Activated CD4-positive, alpha-beta T cell treated with anti-CD3 and anti-CD28 coated beads for 36 hours (primary cell): ENCODE measurements at regions of chr18 and their contacts with region 1.

Region 1: DNA sequence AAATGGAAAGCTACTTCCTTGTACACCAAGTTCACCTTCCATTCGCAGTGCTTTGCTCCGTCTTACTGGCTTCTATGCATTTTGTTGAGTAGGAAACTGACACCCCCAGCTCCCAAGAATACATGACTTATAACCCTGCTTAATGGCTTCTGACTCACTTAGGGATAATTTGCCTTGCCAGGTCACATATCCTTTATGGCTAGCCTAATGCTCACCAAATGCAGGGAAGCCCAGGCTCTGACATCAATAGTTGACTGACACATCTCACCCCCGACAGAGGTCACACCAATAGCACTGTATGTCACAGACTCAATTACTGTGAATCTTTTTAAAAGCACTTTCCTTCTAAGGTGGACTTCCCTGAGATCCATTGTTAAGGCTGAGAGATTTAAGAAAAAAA is 147.2 kb downstream of the DTNA start:
- DNase-seq: no peak
- ATAC-seq: no peak
- H3K4me3 Mint-ChIP-seq: no peak overlapping the region
- H3K27ac Mint-ChIP-seq: peak overlapping the region; percentile 23
- H3K4me1 Mint-ChIP-seq: peaks cover 35% of the 10 kb centered on the region
- H3K27me3 Mint-ChIP-seq: peaks cover 20% of the 10 kb centered on the region

Region 2: DNA sequence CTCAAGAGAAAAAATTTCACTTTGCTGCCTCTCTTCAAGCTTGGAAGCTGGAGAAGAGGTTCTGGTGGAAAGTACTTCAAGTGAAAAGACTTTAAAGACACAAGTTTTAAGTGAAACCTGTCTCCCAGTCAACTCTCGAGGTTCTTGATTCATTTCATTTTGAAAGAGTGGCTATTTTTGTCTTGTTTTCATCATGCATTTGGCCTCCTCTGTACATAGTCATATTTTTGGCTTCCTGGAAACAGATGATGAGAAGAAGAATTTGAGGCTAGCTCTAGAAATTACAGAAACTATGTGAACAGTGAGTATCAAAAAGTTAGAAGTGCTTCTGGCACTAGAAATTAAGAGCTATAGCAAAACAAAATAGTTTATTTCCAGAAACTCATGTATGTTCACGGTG is 22.4 kb before region 1 on chr18:
- CTCF ChIA-PET with region 1: no interaction called
- POLR2A ChIA-PET with region 1: no interaction called
- intact Hi-C with region 1: loop called (anchors 1 to 2 kb)
- DNase-seq: no peak
- ATAC-seq: peak; percentile 91
- H3K4me3 Mint-ChIP-seq: no peak overlapping the region
- H3K27ac Mint-ChIP-seq: peak overlapping the region; percentile 87
- H3K4me1 Mint-ChIP-seq: peaks cover 17% of the 10 kb centered on the region
- H3K27me3 Mint-ChIP-seq: peaks cover 9% of the 10 kb centered on the region

Region 3: DNA sequence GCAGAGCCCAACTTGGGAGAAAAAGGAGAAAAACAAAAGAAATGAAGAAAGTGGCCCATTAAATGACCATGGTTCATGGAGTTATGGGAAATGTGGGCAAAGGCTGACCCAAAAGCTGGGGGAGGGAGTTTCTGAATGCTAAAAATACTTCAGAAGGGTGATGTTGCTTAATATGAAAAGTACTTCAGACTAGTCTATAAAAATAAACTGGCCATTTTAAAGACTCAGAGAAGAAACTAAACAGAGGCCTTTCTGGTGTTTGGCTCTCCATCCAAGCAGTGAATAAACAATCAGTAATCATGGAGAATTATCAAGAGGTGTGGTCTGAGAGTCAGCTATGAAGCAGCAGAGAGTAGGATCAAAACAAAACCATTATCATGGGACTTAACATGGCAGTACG is 23.1 kb after region 1 on chr18:
- CTCF ChIA-PET with region 1: no interaction called
- POLR2A ChIA-PET with region 1: no interaction called
- intact Hi-C with region 1: no loop called
- DNase-seq: no peak
- ATAC-seq: no peak
- H3K4me3 Mint-ChIP-seq: no peak overlapping the region
- H3K27ac Mint-ChIP-seq: no peak overlapping the region
- H3K4me1 Mint-ChIP-seq: peaks cover 4% of the 10 kb centered on the region
- H3K27me3 Mint-ChIP-seq: peaks cover 12% of the 10 kb centered on the region

Region 4: DNA sequence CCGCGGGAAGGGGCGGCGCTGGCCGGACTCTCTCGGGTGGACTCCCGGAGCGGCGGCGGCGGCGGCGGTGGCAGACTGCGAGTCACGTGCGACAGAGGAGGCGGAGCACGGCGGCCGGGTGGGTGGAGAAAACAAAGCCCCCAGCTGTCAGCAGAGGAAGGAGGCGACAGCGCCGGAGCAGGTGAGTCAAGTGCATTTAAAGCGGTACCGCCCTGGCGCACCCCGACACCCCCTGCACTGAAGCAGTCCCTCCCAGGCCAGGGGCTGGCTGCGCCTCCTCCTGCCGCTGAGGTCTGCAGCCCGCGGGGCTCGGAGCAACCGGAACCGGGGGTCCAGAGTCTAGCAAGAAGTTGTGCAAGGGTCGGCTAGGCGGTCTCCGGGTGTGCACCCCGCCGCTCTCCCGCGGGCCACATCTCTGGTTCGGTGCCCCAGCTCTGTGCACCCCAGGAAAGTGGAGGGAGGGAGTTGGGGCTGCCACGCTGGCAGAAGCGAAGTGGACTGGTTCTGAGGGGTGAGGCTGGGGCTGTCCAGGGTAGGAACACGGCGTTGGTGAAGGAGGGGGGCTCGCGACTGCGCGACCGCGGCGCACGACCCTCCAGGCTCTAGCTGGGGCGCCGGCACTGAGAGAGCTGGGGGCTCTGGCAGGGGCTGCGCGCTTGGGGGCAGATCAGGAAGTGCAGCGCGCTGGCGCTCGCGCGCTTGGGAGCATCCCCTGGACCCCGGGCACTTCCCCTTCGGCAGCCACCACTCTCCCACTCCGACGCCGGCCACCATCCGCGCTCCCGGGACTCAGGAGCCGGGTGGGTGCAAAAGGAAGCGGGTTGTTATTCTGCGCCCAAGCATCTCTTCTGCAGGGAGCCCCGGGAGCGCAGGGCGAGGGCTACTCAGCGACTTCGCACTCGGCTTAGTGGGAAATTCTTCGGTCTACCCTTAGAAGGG is 119.8 kb after region 1 on chr18:
- CTCF ChIA-PET with region 1: no interaction called
- POLR2A ChIA-PET with region 1: no interaction called
- intact Hi-C with region 1: loop called (anchors 1 kb)
- DNase-seq: peak; percentile 85
- ATAC-seq: peak; percentile 55
- H3K4me3 Mint-ChIP-seq: peak overlapping the region; percentile 73
- H3K27ac Mint-ChIP-seq: no peak overlapping the region
- H3K4me1 Mint-ChIP-seq: peaks cover 23% of the 10 kb centered on the region
- H3K27me3 Mint-ChIP-seq: peaks cover 32% of the 10 kb centered on the region